K562 (cell line): ENCODE measurements at regions of chr16 and their contacts with region 1.

Region 1: GRCh38 chr16:56789360-56789759 is 59.4 kb downstream of the NUP93 start:
- DNase-seq: peak in 3 of 4 experiments; percentile 14 to 19 (median 17)
- ATAC-seq: peak; percentile 54; the same call in 1 of the 3 replicates
- H3K4me3 ChIP-seq: no peak overlapping the region
- H3K27ac ChIP-seq: no peak overlapping the region
- H3K4me1 ChIP-seq: no peaks in the 10 kb centered on the region
- H3K27me3 ChIP-seq: no peaks in the 10 kb centered on the region
- CTCF ChIP-seq: peak; percentile 38 to 62 (median 52); a peak in 5 of 6 replicates
- EP300 ChIP-seq: no peak
- POLR2A ChIP-seq: no peak
- RAD21 ChIP-seq: peak; percentile 42 to 65

Region 2: DNA sequence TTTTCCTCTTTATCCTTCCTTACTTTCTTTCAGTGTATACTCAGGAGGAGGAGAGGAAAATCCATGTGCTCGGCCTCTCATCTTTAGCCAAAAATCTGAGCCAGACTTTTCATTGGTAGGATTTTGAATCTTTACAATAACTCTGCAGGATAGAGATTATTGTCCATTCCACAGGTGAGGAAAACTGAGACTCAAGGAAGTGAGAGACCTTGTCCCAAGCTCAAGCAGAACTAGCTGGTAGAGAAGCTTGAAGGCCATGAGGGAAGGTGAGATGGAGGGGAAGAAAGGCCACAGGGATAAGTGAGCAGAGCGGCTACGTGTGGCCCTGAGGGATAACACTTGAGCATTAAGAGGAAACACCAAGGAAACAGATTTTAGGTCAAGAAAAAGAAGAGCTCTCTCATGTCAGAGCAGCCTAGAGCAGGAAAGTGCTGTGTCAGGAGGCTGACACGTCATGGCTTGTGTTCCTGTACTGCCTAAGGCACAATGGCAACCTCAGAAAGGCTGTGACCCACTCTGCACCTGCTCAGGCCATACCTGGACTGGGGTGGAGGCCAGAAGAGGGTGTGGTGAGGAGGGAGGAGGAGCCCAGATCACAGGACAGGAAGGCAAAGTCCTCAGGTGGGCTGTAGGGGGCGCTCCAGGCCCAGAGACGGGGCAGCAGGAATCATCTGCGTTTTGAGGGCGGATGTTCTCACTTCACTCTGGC is 212.6 kb before region 1 on chr16:
- CTCF ChIA-PET with region 1: interaction called, 11 read pairs
- POLR2A ChIA-PET with region 1: no interaction called
- in situ Hi-C with region 1: no loop called
- intact Hi-C with region 1: loop called (anchors 10 kb)
- DNase-seq: peak; percentile 77 to 86 (median 84)
- ATAC-seq: peak; percentile 100
- H3K4me3 ChIP-seq: no peak overlapping the region
- H3K27ac ChIP-seq: no peak overlapping the region
- H3K4me1 ChIP-seq: no peaks in the 10 kb centered on the region
- H3K27me3 ChIP-seq: peaks cover 2 to 10% of the 10 kb centered on the region in 2 experiments; a peak in 4 of 5 replicates
- CTCF ChIP-seq: peak; percentile 93 to 96 (median 95)
- EP300 ChIP-seq: no peak
- POLR2A ChIP-seq: no peak
- RAD21 ChIP-seq: peak; percentile 88 to 96

Region 3: DNA sequence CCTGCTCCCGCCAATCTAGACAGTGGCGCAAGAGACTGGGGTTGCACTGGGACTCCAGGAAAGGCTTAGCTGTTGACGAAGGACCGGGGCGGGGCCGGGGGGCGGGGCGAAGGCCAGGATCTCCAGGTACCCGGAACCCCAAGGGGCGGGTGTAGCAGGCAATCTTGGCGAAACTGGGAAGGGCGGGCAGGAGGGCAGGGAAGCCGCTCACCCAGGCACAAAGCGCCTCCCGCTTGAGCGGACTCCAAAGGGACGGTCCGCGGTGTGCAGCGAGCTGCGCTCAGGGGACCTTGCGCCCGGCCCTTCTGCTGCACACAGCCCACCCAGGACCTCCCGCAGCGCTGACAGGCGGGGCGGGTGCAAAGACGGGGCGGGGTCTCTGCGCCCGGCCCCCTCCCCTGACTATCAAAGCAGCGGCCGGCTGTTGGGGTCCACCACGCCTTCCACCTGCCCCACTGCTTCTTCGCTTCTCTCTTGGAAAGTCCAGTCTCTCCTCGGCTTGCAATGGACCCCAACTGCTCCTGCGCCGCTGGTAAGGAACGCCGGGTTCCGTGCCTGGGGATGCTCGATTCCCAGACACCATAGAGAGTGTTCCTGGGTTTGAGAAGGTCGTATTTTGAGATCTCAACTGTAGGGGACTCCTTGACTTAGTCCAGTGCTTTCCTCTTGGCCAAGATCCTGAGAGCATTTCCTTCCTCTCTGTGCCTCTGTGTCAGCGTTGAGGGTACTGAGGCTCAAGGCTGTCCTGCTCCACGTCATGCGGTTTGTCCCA is 131.6 kb before region 1 on chr16 and contains the start of gene MT1F:
- CTCF ChIA-PET with region 1: no interaction called
- POLR2A ChIA-PET with region 1: no interaction called
- in situ Hi-C with region 1: no loop called
- intact Hi-C with region 1: no loop called
- DNase-seq: peak; percentile 62 to 85 (median 74)
- ATAC-seq: peak; percentile 92
- H3K4me3 ChIP-seq: peak within 1 kb of the TSS; percentile 32
- H3K27ac ChIP-seq: no peak within 1 kb of the TSS
- H3K4me1 ChIP-seq: peaks cover 0 to 7% of the 10 kb centered on the region in 2 experiments; a peak in 2 of 5 replicates
- H3K27me3 ChIP-seq: peaks cover 31 to 73% of the 10 kb centered on the region in 2 experiments; a peak in 4 of 5 replicates
- CTCF ChIP-seq: no peak
- EP300 ChIP-seq: no peak
- POLR2A ChIP-seq: no peak
- RAD21 ChIP-seq: no peak
- polyA plus RNA-seq, gene MT1F: 0.18 TPM in 1 of 2 experiments, not detected in the other

Region 4: DNA sequence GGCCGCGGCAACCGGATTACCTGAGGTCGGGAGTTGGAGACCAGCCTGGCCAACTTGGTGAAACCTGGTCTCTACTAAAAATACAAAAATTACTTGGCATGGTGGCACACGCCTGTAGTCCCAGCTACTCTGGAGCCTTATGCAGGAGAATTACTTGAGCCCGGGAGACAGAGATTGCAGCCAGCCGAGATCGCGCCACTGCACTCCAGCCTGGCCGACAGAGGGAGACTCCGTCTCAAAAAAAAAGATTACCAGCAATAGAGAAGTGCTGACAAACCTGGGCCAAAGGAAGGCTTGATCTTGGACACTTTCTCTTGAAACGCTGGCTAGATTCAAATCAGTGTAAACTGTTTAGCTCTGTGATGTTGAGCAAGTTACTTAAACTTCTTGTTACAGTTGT is 115.4 kb before region 1 on chr16:
- CTCF ChIA-PET with region 1: interaction called, 11 read pairs
- POLR2A ChIA-PET with region 1: interaction called, 3 read pairs
- in situ Hi-C with region 1: no loop called
- intact Hi-C with region 1: no loop called
- DNase-seq: peak in 1 of 4 experiments; percentile 51
- ATAC-seq: peak; percentile 87
- H3K4me3 ChIP-seq: no peak overlapping the region
- H3K27ac ChIP-seq: no peak overlapping the region
- H3K4me1 ChIP-seq: peaks cover 0 to 11% of the 10 kb centered on the region in 2 experiments; a peak in 1 of 5 replicates
- H3K27me3 ChIP-seq: peaks cover 33 to 54% of the 10 kb centered on the region in 2 experiments
- CTCF ChIP-seq: peak; percentile 70 to 73 (median 73)
- EP300 ChIP-seq: no peak
- POLR2A ChIP-seq: no peak
- RAD21 ChIP-seq: peak; percentile 60 to 76

Region 5: DNA sequence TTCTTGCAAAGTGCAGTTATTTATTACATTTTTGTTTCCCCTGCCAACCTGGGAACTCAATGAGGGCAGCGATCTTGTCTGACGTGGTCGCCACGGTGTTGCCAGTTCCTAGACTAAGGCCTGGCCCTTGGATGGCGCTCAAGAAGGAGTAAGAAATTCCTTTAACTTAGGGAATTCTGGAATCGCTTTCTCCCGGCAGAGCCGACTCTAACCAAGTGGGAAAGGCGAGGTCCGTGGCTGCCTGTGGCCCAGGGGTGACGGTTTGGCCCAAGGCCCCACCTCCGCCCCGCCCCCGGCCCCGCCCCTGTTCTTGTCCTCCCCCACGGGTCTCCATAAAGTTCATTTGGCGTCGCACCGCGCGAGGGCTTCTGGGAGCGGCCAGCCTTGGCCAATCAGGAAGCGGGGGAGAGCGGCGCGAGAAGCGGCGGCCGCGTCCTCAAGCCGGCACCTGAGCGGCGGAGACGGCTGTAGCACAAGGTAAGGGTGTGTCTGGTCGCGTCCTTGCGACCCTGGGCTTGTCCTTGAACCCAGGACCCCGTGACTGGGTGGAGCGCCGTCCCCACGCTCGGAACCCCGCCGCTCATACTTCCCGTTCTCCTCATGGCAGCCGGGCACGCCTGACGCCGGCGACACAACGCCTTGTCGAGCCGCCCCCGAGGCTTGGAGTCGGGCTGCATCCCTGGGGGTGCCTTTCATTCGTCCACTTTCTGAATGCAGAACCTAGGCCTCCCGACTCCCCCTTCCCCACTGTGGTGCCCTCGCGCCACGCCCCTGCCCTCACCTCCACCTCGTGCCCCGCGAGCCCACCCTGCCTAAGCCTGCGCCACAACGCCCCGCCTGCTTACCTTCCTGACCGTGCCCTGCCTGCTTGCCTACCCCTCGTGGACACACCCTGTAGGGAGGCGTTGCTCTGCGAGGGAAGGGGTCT is 59.4 kb before region 1 on chr16 and contains the start of gene NUP93:
- CTCF ChIA-PET with region 1: no interaction called
- POLR2A ChIA-PET with region 1: no interaction called
- in situ Hi-C with region 1: no loop called
- intact Hi-C with region 1: loop called (anchors 5 kb)
- DNase-seq: peak; percentile 95 to 96 (median 96)
- ATAC-seq: peak; percentile 95
- H3K4me3 ChIP-seq: peak within 1 kb of the TSS; percentile 90
- H3K27ac ChIP-seq: peak within 1 kb of the TSS; percentile 88
- H3K4me1 ChIP-seq: peaks cover 20 to 33% of the 10 kb centered on the region in 2 experiments
- H3K27me3 ChIP-seq: no peaks in the 10 kb centered on the region
- CTCF ChIP-seq: no peak
- EP300 ChIP-seq: no peak; the same call in 1 of the 2 replicates
- POLR2A ChIP-seq: peak; percentile 94
- RAD21 ChIP-seq: no peak
- polyA plus RNA-seq, gene NUP93: 111 to 162 TPM

Region 6: GRCh38 chr16:56777482-56777881 is 11.9 kb before region 1 on chr16:
- CTCF ChIA-PET with region 1: no interaction called
- POLR2A ChIA-PET with region 1: interaction called, 10 read pairs
- in situ Hi-C with region 1: no loop called
- intact Hi-C with region 1: no loop called
- DNase-seq: no peak
- ATAC-seq: no peak
- H3K4me3 ChIP-seq: no peak overlapping the region
- H3K27ac ChIP-seq: no peak overlapping the region
- H3K4me1 ChIP-seq: no peaks in the 10 kb centered on the region
- H3K27me3 ChIP-seq: no peaks in the 10 kb centered on the region
- CTCF ChIP-seq: no peak
- EP300 ChIP-seq: no peak
- POLR2A ChIP-seq: no peak
- RAD21 ChIP-seq: no peak